Right ventricle myocardium superior (tissue), 1 donor: ENCODE measurements at regions of chr9 and their contacts with region 1.

Region 1: GRCh38 chr9:105647595-105648349 is 14.5 kb upstream of the TAL2 start:
- DNase-seq: no peak
- ATAC-seq: no peak

Region 2: DNA sequence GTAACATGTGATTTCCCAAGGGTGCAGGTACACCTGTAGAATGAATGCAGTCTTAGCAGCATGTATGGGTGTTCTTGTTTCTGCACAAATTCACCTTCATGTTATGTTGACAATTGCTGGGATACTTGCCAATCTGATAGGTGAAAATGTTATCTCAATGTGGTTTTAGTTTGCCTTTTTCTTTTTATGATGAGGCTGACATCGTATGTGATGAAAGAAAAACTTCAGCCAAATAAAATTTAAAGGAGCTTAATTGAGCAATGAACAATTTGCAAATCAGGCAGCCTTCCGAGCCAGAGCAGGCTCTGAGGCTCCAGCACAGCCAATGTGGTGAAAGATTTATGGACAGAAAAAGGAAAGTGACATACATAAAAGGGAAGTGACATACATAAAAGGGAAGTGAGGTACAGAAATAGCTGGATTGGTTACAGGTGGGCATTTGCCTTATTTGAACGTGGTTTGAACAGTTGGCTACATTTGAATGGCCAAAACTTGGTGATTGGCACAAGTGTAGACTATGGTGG is 25.0 kb after region 1 on chr9:
- intact Hi-C with region 1: loop called (anchors 2 kb)
- DNase-seq: no peak
- ATAC-seq: no peak

Region 3: GRCh38 chr9:105760053-105760452 is 112.3 kb after region 1 on chr9:
- intact Hi-C with region 1: no loop called
- DNase-seq: no peak
- ATAC-seq: no peak